Ascending aorta (tissue), 2 donors: ENCODE measurements at regions of chr9 and their contacts with region 1.

Region 1: DNA sequence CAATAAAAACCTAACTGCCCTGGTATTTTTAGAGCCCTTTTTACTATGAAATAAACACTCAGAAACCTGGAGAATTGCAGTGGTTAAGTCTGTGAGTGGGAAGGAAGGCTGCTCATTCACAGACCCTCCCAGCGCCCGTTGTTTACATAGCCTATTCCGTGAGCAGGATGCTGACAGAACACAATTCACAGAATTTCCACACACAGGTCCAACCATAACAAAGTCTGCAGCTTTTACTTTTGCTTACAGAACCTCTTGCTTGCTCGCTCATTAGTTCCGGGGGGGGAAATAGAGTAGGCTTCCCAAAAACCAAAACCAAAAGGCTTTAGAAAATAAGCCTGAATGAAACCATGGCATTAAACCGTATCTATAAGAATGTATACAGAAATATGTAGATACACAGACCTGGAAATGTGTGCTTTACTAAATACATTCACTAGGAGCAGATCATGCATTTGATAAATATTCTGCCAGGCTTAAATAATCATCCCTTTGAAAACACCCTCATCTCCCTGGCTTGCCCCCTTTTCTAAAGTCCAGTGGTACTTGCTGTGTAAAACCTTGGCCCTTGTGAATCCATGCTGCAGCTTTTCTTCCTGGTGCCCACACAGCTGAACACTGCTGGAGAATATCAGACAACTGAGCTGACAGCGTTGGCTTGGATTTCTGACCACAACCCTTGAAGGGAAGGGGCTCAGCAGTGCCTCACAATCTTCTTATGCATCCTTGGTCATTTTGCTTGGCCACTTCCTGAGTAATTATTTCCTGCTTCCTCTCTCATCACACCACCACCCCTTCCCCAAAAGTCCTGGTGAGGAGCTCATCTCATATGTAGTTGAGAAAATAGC is 128.0 kb downstream of the FANCC start:
- DNase-seq: peak in 1 of 2 donors; percentile 79
- H3K4me3 ChIP-seq: peak overlapping the region in 1 of 2 donors; percentile 35
- H3K27ac ChIP-seq: peak overlapping the region; percentile 45 to 77
- H3K4me1 ChIP-seq: peaks cover 9 to 23% of the 10 kb centered on the region in 2 donors
- H3K27me3 ChIP-seq: no peaks in the 10 kb centered on the region
- CTCF ChIP-seq: no peak

Region 2: GRCh38 chr9:95157481-95158151 is 31.9 kb before region 1 on chr9:
- intact Hi-C with region 1: loop called (anchors 2 kb)
- DNase-seq: peak in 1 of 2 donors; percentile 82
- H3K4me3 ChIP-seq: peak overlapping the region in 1 of 2 donors; percentile 18
- H3K27ac ChIP-seq: peak overlapping the region in 1 of 2 donors; percentile 30
- H3K4me1 ChIP-seq: peaks cover 0 to 14% of the 10 kb centered on the region in 2 donors
- H3K27me3 ChIP-seq: no peaks in the 10 kb centered on the region
- CTCF ChIP-seq: no peak

Region 3: DNA sequence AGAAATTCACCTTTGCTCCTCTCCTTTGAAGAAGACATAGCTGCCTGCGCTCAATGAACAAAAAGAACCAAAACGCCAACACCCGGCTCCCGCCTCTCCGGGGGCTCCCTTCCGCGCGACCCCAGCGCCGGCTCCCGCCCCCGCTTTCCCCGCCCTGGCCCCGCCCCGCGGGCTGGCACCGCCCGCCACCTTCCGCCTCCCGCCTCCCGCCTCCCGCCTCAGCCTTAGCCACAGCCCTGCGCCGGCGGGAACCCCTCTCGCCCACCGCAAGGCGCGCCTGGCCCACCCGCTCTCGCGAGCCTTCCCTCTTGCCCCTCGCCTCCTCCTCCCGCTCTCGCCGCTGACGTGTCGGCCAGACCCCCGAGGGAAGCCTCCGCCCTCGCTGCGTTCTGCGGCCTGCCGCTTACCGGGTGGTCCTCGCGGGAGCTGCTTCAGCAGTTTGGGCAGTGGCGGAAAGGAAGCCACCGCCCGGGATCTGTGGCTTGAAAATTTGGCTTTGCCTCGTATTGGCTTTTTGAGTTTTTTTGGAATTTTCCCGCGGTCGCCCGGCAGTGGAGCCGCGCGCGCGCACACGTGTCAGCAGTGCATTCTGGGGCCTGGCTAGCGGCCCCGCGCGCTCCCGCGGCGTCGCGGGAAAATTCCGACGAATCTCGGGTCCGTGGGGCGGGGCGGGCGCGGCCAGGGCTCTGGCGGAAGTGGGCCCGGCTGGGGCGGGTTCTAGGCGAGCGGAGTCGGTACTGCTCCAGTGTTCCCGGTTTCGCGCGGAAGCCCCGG is 127.8 kb after region 1 on chr9 and contains the start of gene FANCC:
- intact Hi-C with region 1: loop called (anchors 10 kb)
- DNase-seq: peak; percentile 50 to 96
- H3K4me3 ChIP-seq: peak within 1 kb of the TSS; percentile 85 to 99
- H3K27ac ChIP-seq: peak within 1 kb of the TSS; percentile 88 to 91
- H3K4me1 ChIP-seq: no peaks in the 10 kb centered on the region
- H3K27me3 ChIP-seq: no peaks in the 10 kb centered on the region
- CTCF ChIP-seq: peak in 1 of 3 experiments; percentile 3
- total RNA-seq, gene FANCC: 0.64 TPM